ENCODE measurements at regions of chr2 and their contacts with region 1.

Region 1: GRCh38 chr2:55718165-55719008 is 24.7 kb upstream of the PNPT1 start:
- DNase-seq: peak in 1 of 2 donors; percentile 57
- H3K4me3 ChIP-seq: no peak overlapping the region
- H3K27ac ChIP-seq: no peak overlapping the region
- H3K4me1 ChIP-seq: no peaks in the 10 kb centered on the region
- H3K27me3 ChIP-seq: no peaks in the 10 kb centered on the region
- CTCF ChIP-seq: peak; percentile 78 to 82

Region 2: DNA sequence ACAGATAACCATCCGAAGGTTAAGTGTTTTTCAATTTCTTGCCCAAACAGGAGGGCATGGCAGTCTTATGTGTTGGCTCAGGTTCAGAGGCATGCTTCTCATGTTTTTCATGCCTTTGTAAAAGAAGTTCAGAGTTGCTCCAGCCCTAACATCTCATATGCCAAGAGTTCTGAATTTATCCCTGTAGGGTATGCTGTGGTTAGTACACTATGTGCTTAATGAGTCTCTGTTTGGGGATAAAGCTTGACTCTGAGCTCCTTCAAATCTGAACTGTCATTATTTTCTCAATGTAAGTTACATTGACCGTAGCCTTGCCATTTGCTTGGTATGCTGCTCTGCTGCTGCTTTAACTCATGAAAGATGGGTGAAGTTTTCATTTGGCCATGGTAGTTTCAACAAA is 43.1 kb after region 1 on chr2:
- intact Hi-C with region 1: loop called (anchors 10 kb)
- DNase-seq: no peak
- H3K4me3 ChIP-seq: no peak overlapping the region
- H3K27ac ChIP-seq: peak overlapping the region; percentile 52 to 64
- H3K4me1 ChIP-seq: peaks cover 0 to 30% (median 11%) of the 10 kb centered on the region in 4 donors
- H3K27me3 ChIP-seq: no peaks in the 10 kb centered on the region
- CTCF ChIP-seq: no peak

Region 3: DNA sequence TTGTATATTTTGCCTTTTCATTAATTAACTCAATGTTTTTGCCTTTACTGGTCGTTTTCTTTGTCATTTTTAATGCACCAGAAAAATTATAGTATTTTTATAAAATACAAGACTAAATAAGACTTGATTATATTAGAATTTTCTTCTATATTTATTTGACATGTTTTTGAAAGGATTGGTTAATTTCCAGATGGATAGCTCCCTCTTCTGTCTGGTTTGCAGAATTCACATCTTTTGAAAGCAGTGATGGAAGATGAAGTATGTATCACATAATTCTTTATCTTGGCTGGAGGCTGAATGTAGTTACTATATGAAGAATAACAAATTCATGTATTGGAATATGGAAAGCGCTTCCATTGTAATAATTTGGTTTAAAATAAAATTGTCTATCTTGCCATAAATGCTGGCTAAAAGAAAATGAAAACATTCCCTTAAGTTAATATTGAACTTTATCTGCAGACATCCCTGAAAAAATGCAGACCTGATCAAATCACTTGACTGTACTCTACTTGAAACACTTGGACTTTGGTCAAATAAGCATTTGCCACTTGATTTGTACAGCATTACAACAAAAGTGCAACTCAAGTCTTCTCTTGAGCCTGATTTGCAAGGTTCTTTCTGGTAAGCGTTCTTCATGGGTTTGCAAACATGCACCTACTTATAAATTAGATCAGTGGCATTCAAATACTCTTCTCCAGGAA is 291.5 kb after region 1 on chr2:
- intact Hi-C with region 1: loop called (anchors 5 kb)
- DNase-seq: no peak
- H3K4me3 ChIP-seq: no peak overlapping the region
- H3K27ac ChIP-seq: no peak overlapping the region
- H3K4me1 ChIP-seq: peaks cover 0 to 12% (median 5%) of the 10 kb centered on the region in 4 donors
- H3K27me3 ChIP-seq: no peaks in the 10 kb centered on the region
- CTCF ChIP-seq: peak; percentile 57 to 68

Region 4: GRCh38 chr2:56132138-56132537 is 413.8 kb after region 1 on chr2:
- intact Hi-C with region 1: loop called (anchors 5 kb)
- DNase-seq: no peak
- H3K4me3 ChIP-seq: no peak overlapping the region
- H3K27ac ChIP-seq: no peak overlapping the region
- H3K4me1 ChIP-seq: no peaks in the 10 kb centered on the region
- H3K27me3 ChIP-seq: no peaks in the 10 kb centered on the region
- CTCF ChIP-seq: peak; percentile 41 to 58

Measured in tibial artery (tissue), 4 donors.